Naive thymus-derived CD8-positive, alpha-beta T cell (primary cell): ENCODE measurements at regions of chr10 and their contacts with region 1.

Region 1: DNA sequence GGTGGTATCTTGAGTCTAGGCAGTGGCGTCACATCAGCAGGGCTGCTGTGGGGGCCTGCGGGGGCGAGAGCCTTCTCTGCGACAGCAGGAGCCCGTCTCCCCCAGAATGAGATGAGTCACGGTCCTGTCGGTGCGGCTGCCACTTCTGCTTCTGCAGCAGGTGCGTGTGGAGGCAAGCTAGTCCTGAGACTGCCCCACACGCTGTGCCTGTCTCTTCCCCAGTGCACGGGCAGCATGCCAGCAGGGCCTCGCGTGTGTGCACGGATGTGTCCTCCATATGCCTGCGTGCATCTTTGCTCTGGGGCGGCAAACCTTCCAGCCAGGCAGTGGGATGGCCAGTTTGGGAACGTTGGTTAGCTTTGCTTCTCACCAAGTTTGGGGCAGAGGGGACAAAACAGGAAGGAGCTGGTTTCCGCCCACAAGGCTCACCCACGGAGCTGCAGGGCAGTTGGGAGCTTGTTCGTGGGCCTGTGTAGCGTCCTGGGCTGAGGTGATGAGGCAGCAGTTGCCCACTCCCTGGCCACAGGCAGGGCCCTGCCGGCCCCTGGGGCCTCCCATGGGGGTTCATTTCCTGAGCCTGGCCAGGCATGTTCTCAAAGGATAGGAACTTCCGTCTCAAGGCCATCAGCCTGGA is 60.8 kb upstream of the PPIF start:
- DNase-seq: peak; percentile 26 to 91 (median 61)
- ATAC-seq: peak; percentile 97 to 98
- H3K4me3 Mint-ChIP-seq: peak overlapping the region; percentile 64 to 88 (median 72)
- H3K27ac Mint-ChIP-seq: peak overlapping the region; percentile 41 to 93 (median 84)
- H3K4me1 Mint-ChIP-seq: peaks cover 17 to 63% (median 38%) of the 10 kb centered on the region in 4 donors
- H3K27me3 Mint-ChIP-seq: no peaks in the 10 kb centered on the region

Region 2: GRCh38 chr10:79322616-79323543 is 36.4 kb after region 1 on chr10:
- POLR2A ChIA-PET with region 1: interaction called, 12 read pairs
- DNase-seq: peak; percentile 51 to 94 (median 88)
- ATAC-seq: peak; percentile 97
- H3K4me3 Mint-ChIP-seq: peak overlapping the region; percentile 70 to 91 (median 82)
- H3K27ac Mint-ChIP-seq: peak overlapping the region; percentile 81 to 97 (median 94)
- H3K4me1 Mint-ChIP-seq: peaks cover 39 to 66% (median 58%) of the 10 kb centered on the region in 4 donors
- H3K27me3 Mint-ChIP-seq: no peaks in the 10 kb centered on the region